Mammary epithelial cell (primary cell): ENCODE measurements at regions of chr2 and their contacts with region 1.

Region 1: GRCh38 chr2:98731041-98731893 is at the start of gene MGAT4A:
- DNase-seq: peak; percentile 43
- H3K4me3 ChIP-seq: peak within 1 kb of the TSS; percentile 65 to 72 (median 68)
- H3K27ac ChIP-seq: no peak within 1 kb of the TSS
- H3K4me1 ChIP-seq: peaks cover 17% of the 10 kb centered on the region
- H3K27me3 ChIP-seq: no peaks in the 10 kb centered on the region
- CTCF ChIP-seq: no peak
- total RNA-seq, gene MGAT4A: 2.0 to 4.3 TPM

Region 2: GRCh38 chr2:98664327-98664726 is 66.9 kb before region 1 on chr2:
- CTCF ChIA-PET with region 1: no interaction called
- dilution Hi-C with region 1: no loop called
- in situ Hi-C with region 1: no loop called
- intact Hi-C with region 1: loop called (anchors 2 kb)
- DNase-seq: peak; percentile 88
- H3K4me3 ChIP-seq: no peak overlapping the region
- H3K27ac ChIP-seq: peak overlapping the region; percentile 79
- H3K4me1 ChIP-seq: peaks cover 12% of the 10 kb centered on the region
- H3K27me3 ChIP-seq: no peaks in the 10 kb centered on the region
- CTCF ChIP-seq: no peak